B cell (primary cell): ENCODE measurements at regions of chr5 and their contacts with region 1.

Region 1: DNA sequence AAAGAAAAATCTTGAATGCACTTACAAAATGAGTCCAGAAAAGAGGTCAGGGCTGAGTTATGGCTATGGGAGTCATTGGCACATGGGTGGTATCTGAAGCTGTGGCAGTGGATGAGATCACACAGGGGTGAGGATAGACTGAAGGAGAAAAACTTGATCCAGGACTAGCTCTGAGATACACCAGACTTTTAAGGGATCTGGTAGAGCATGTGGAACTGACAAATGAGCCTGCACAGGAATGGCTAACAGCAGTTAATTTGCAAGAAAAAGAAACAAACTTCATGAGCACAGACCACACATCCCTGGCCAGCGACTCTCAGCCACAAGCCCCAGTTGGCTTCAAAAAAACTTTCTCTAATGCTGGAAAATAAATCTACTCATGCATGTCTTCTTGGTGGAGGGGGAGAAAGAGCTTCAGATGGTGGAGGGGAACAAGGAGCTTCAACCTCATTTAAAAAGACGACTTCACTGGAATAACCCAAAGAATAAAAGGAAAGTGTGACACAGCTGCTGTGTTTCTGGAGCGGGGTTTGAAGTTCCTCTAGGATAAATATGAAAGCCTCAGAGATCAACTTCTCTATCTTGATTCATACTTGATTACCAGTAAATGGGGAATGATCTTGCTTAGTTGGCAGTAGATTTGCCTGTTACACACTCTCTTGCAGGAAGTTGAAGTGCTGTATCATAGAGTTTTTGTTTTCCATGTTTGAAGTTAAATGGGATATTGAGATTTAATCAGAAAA is 33.6 kb downstream of the TNFAIP8 start:
- DNase-seq: no peak
- ATAC-seq: peak; percentile 17
- H3K4me3 ChIP-seq: peak overlapping the region in 1 of 5 experiments; percentile 16
- H3K4me3 Mint-ChIP-seq: peak overlapping the region; percentile 48
- H3K27ac ChIP-seq: peak overlapping the region; percentile 45 to 71
- H3K27ac Mint-ChIP-seq: peak overlapping the region; percentile 78
- H3K4me1 ChIP-seq: peaks cover 83 to 91% of the 10 kb centered on the region in 2 donors
- H3K4me1 Mint-ChIP-seq: peaks cover 90% of the 10 kb centered on the region
- H3K27me3 ChIP-seq: no peaks in the 10 kb centered on the region
- H3K27me3 Mint-ChIP-seq: no peaks in the 10 kb centered on the region
- CTCF ChIP-seq: no peak

Region 2: DNA sequence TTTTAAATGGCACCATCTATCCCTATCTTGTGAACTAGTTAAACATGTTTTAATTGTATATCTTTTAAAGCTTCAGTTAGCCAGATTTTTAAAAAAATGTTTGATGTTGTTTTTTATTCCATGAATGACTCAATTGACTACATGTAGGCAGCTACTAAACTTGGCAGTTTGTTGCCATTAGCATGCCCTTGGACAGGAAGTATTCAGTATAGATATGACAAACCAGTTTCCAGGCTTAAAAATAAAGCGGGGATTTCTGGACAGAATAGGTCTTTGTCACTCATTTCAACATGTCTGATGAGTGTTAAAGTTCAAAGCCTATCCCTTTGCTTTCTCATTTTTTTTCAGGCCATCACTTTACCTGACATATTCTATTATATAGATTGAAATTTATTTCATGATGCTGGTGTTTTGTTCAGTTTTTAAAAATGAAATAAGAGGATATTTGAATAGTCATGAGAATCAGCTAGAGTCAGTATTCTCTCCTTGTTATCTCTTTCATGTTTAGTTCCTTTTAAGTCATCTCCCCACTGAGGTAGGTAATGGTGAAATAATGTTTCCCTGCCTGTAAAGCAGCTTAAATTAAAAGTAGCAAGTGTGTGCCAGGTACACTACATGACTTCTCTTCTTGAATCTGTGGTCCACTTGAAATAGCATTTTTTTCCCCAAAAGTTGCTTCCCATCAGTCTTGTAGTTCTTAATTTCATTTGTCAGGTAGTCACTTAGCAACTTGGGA is 21.8 kb before region 1 on chr5:
- CTCF ChIA-PET with region 1: interaction called, 4 read pairs
- POLR2A ChIA-PET with region 1: interaction called, 5 read pairs
- intact Hi-C with region 1: loop called (anchors 2 kb)
- DNase-seq: peak; percentile 49
- ATAC-seq: peak; percentile 55
- H3K4me3 ChIP-seq: peak overlapping the region in 3 of 5 experiments; percentile 9 to 40 (median 13)
- H3K4me3 Mint-ChIP-seq: peak overlapping the region; percentile 68
- H3K27ac ChIP-seq: peak overlapping the region; percentile 67 to 79
- H3K27ac Mint-ChIP-seq: peak overlapping the region; percentile 92
- H3K4me1 ChIP-seq: peaks cover 82 to 88% of the 10 kb centered on the region in 2 donors
- H3K4me1 Mint-ChIP-seq: peaks cover 83% of the 10 kb centered on the region
- H3K27me3 ChIP-seq: no peaks in the 10 kb centered on the region
- H3K27me3 Mint-ChIP-seq: no peaks in the 10 kb centered on the region
- CTCF ChIP-seq: no peak

Region 3: DNA sequence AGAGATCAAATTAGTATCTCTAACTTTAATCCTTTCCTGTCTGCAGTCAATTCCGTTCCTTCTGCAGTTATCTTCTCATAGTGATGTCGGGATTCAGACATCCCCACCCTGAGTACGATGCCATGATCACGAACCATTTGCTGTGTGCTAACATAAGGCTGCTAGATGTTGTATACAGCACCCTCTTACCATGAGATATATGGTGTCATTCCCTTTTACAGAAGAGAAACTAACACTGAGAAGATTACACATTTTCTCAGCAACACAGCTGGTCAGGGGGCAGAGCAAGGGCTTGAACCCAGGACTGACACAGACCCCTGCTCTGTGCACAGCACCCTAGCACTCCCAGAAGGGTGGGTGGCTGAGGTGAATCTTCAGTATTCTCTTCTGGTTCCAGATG is 16.0 kb after region 1 on chr5:
- CTCF ChIA-PET with region 1: interaction called, 3 read pairs
- POLR2A ChIA-PET with region 1: no interaction called
- intact Hi-C with region 1: loop called (anchors 2 kb)
- DNase-seq: no peak
- ATAC-seq: peak; percentile 28
- H3K4me3 ChIP-seq: peak overlapping the region in 1 of 5 experiments; percentile 4
- H3K4me3 Mint-ChIP-seq: peak overlapping the region; percentile 69
- H3K27ac ChIP-seq: peak overlapping the region; percentile 68 to 73
- H3K27ac Mint-ChIP-seq: peak overlapping the region; percentile 91
- H3K4me1 ChIP-seq: peaks cover 36 to 46% of the 10 kb centered on the region in 2 donors
- H3K4me1 Mint-ChIP-seq: peaks cover 75% of the 10 kb centered on the region
- H3K27me3 ChIP-seq: no peaks in the 10 kb centered on the region
- H3K27me3 Mint-ChIP-seq: no peaks in the 10 kb centered on the region
- CTCF ChIP-seq: no peak